CD8-positive, alpha-beta T cell (primary cell): ENCODE measurements at regions of chr2 and their contacts with region 1.

Region 1: GRCh38 chr2:101387151-101387807 is at the start of gene CREG2:
- DNase-seq: peak; percentile 20 to 73 (median 50)
- ATAC-seq: peak; percentile 90
- H3K4me3 ChIP-seq: peak within 1 kb of the TSS; percentile 33 to 37
- H3K4me3 Mint-ChIP-seq: peak within 1 kb of the TSS; percentile 73
- H3K27ac ChIP-seq: no peak within 1 kb of the TSS
- H3K27ac Mint-ChIP-seq: no peak within 1 kb of the TSS
- H3K4me1 ChIP-seq: peaks cover 4% of the 10 kb centered on the region
- H3K4me1 Mint-ChIP-seq: peaks cover 14% of the 10 kb centered on the region
- H3K27me3 ChIP-seq: peaks cover 9 to 13% of the 10 kb centered on the region in 2 experiments
- H3K27me3 Mint-ChIP-seq: peaks cover 47% of the 10 kb centered on the region
- CTCF ChIP-seq: peak; percentile 61
- total RNA-seq, gene CREG2: not detected

Region 2: GRCh38 chr2:101349893-101350662 is 37.2 kb before region 1 on chr2:
- CTCF ChIA-PET with region 1: interaction called, 15 read pairs
- POLR2A ChIA-PET with region 1: interaction called, 3 read pairs
- intact Hi-C with region 1: no loop called
- DNase-seq: peak in 2 of 9 experiments; percentile 25 to 47
- ATAC-seq: no peak
- H3K4me3 ChIP-seq: no peak overlapping the region
- H3K4me3 Mint-ChIP-seq: no peak overlapping the region
- H3K27ac ChIP-seq: no peak overlapping the region
- H3K27ac Mint-ChIP-seq: no peak overlapping the region
- H3K4me1 ChIP-seq: no peaks in the 10 kb centered on the region
- H3K4me1 Mint-ChIP-seq: peaks cover 4% of the 10 kb centered on the region
- H3K27me3 ChIP-seq: no peaks in the 10 kb centered on the region
- H3K27me3 Mint-ChIP-seq: no peaks in the 10 kb centered on the region
- CTCF ChIP-seq: no peak

Region 3: DNA sequence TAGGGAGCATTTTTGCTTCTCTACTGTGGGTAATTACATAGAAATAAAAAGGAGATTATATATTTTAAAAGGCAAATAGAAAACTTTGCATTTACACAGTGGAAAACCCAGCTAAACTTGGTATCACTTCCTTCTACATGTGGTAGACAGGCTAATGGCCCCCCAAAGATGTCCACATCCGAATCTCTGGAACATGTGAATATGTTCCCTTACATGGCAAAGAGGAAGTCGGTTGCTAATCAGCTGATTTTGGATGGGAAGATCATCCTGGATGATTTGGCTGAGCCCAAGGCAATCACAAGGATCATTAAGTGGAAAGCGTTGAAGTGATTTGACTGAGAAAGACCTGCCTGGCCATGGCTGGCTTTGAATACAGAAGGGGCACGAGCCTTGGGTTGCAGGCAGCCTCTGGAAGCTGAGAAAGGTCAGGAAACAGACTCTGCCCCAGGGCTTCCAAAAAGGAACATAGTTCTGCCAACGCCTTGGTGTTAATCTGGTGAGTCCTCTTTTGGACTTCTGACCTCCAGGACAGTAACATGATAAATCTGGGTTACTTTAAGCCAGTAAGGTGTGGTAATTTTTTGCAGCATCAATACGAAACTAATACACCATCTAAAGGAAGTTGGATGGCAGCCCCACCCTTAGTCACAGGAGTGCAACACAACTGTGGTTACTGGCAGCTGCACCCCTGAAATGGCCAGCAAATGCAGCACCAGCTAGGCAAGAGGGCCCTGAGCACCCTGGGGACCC is 26.0 kb before region 1 on chr2:
- CTCF ChIA-PET with region 1: interaction called, 22 read pairs
- POLR2A ChIA-PET with region 1: no interaction called
- intact Hi-C with region 1: no loop called
- DNase-seq: peak in 4 of 9 experiments; percentile 20 to 60 (median 36)
- ATAC-seq: peak; percentile 54
- H3K4me3 ChIP-seq: no peak overlapping the region
- H3K4me3 Mint-ChIP-seq: peak overlapping the region; percentile 16
- H3K27ac ChIP-seq: peak overlapping the region in 1 of 2 experiments; percentile 56
- H3K27ac Mint-ChIP-seq: no peak overlapping the region
- H3K4me1 ChIP-seq: peaks cover 17% of the 10 kb centered on the region
- H3K4me1 Mint-ChIP-seq: peaks cover 24% of the 10 kb centered on the region
- H3K27me3 ChIP-seq: no peaks in the 10 kb centered on the region
- H3K27me3 Mint-ChIP-seq: no peaks in the 10 kb centered on the region
- CTCF ChIP-seq: no peak

Region 4: DNA sequence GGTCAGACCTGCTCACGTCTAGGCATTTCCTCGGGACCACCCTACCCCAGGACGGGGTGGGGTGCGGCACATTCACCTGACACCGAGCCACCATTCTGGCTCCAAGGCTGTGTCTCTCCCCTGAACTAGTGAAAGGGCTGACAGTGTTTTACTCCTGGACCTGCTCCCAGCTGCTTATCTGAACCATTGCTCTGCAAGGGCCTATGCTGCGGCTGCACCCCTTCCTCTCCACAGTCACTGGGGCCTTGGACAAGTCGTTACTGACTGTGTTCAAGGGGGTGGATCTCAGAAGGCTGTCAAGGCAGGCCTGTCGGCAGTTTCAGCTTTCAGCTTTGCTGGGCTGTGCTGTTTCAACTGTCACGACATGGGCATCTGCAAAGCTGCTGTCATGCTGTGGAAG is 11.6 kb before region 1 on chr2:
- CTCF ChIA-PET with region 1: interaction called, 16 read pairs
- POLR2A ChIA-PET with region 1: no interaction called
- intact Hi-C with region 1: no loop called
- DNase-seq: no peak
- ATAC-seq: no peak
- H3K4me3 ChIP-seq: no peak overlapping the region
- H3K4me3 Mint-ChIP-seq: no peak overlapping the region
- H3K27ac ChIP-seq: no peak overlapping the region
- H3K27ac Mint-ChIP-seq: no peak overlapping the region
- H3K4me1 ChIP-seq: no peaks in the 10 kb centered on the region
- H3K4me1 Mint-ChIP-seq: peaks cover 3% of the 10 kb centered on the region
- H3K27me3 ChIP-seq: peaks cover 0 to 2% of the 10 kb centered on the region in 2 experiments
- H3K27me3 Mint-ChIP-seq: no peaks in the 10 kb centered on the region
- CTCF ChIP-seq: no peak